ENCODE measurements at regions of chr10 and their contacts with region 1.

Region 1: GRCh38 chr10:71713135-71714030 is 6.2 kb downstream of the C10orf105 start:
- DNase-seq: peak in 5 of 14 experiments; percentile 17 to 64 (median 54)
- ATAC-seq: peak; percentile 32
- H3K4me3 ChIP-seq: peak overlapping the region; percentile 39
- H3K4me3 Mint-ChIP-seq: peak overlapping the region; percentile 80
- H3K27ac ChIP-seq: peak overlapping the region; percentile 74 to 90
- H3K27ac Mint-ChIP-seq: peak overlapping the region; percentile 98
- H3K4me1 ChIP-seq: peaks cover 83% of the 10 kb centered on the region
- H3K4me1 Mint-ChIP-seq: peaks cover 74% of the 10 kb centered on the region
- H3K27me3 ChIP-seq: no peaks in the 10 kb centered on the region
- H3K27me3 Mint-ChIP-seq: no peaks in the 10 kb centered on the region
- CTCF ChIP-seq: no peak

Region 2: GRCh38 chr10:71319042-71319799 is 394.2 kb before region 1 on chr10 and contains the start of gene SLC29A3:
- CTCF ChIA-PET with region 1: interaction called, 11 read pairs
- POLR2A ChIA-PET with region 1: interaction called, 4 read pairs
- intact Hi-C with region 1: loop called (anchors 5 kb)
- DNase-seq: peak; percentile 69 to 93 (median 79)
- ATAC-seq: peak; percentile 86
- H3K4me3 ChIP-seq: peak within 1 kb of the TSS; percentile 88
- H3K4me3 Mint-ChIP-seq: peak within 1 kb of the TSS; percentile 97
- H3K27ac ChIP-seq: no peak within 1 kb of the TSS
- H3K27ac Mint-ChIP-seq: peak within 1 kb of the TSS; percentile 66
- H3K4me1 ChIP-seq: peaks cover 32% of the 10 kb centered on the region
- H3K4me1 Mint-ChIP-seq: peaks cover 31% of the 10 kb centered on the region
- H3K27me3 ChIP-seq: no peaks in the 10 kb centered on the region
- H3K27me3 Mint-ChIP-seq: no peaks in the 10 kb centered on the region
- CTCF ChIP-seq: peak; percentile 56
- total RNA-seq, gene SLC29A3: 2.3 to 2.5 TPM

Measured in CD4-positive, alpha-beta T cell (primary cell).